K562 (cell line): ENCODE measurements at regions of chr3 and their contacts with region 1.

Region 1: GRCh38 chr3:12879191-12879815 is 37.9 kb upstream of the RPL32 start:
- DNase-seq: peak in 2 of 4 experiments; percentile 61 to 67
- ATAC-seq: peak; percentile 42
- H3K4me3 ChIP-seq: no peak overlapping the region
- H3K27ac ChIP-seq: peak overlapping the region; percentile 43
- H3K4me1 ChIP-seq: peaks cover 56 to 77% of the 10 kb centered on the region in 2 experiments
- H3K27me3 ChIP-seq: no peaks in the 10 kb centered on the region
- CTCF ChIP-seq: no peak
- EP300 ChIP-seq: no peak
- POLR2A ChIP-seq: no peak
- RAD21 ChIP-seq: no peak

Region 2: GRCh38 chr3:12868039-12869034 is 11.0 kb before region 1 on chr3:
- CTCF ChIA-PET with region 1: no interaction called
- POLR2A ChIA-PET with region 1: interaction called, 8 read pairs
- in situ Hi-C with region 1: no loop called
- intact Hi-C with region 1: loop called (anchors 1 kb)
- DNase-seq: peak; percentile 85 to 97 (median 86)
- ATAC-seq: peak; percentile 89
- H3K4me3 ChIP-seq: peak overlapping the region; percentile 47
- H3K27ac ChIP-seq: peak overlapping the region; percentile 79
- H3K4me1 ChIP-seq: peaks cover 8 to 22% of the 10 kb centered on the region in 2 experiments
- H3K27me3 ChIP-seq: no peaks in the 10 kb centered on the region
- CTCF ChIP-seq: peak; percentile 92 to 98 (median 96)
- EP300 ChIP-seq: peak; percentile 45
- POLR2A ChIP-seq: peak; percentile 69
- RAD21 ChIP-seq: peak; percentile 98 to 99